Activated CD8-positive, alpha-beta memory T cell treated with anti-CD3 and anti-CD28 coated beads, Interleukin-2, amount 10 ng/mL, durations not matched to agents 7 days and 5 days (primary cell): ENCODE measurements at regions of chr15 and their contacts with region 1.

Region 1: GRCh38 chr15:45402162-45402954 is 24.0 kb upstream of the GATM start:
- DNase-seq: peak; percentile 98
- ATAC-seq: peak; percentile 94
- H3K4me3 Mint-ChIP-seq: peak overlapping the region; percentile 87
- H3K27ac Mint-ChIP-seq: peak overlapping the region; percentile 87
- H3K4me1 Mint-ChIP-seq: peaks cover 38% of the 10 kb centered on the region
- H3K27me3 Mint-ChIP-seq: no peaks in the 10 kb centered on the region

Region 2: GRCh38 chr15:45166834-45167630 is 235.3 kb before region 1 on chr15:
- CTCF ChIA-PET with region 1: interaction called, 34 read pairs
- DNase-seq: peak; percentile 92
- ATAC-seq: peak; percentile 95
- H3K4me3 Mint-ChIP-seq: peak overlapping the region; percentile 61
- H3K27ac Mint-ChIP-seq: peak overlapping the region; percentile 79
- H3K4me1 Mint-ChIP-seq: peaks cover 14% of the 10 kb centered on the region
- H3K27me3 Mint-ChIP-seq: no peaks in the 10 kb centered on the region

Region 3: GRCh38 chr15:45205192-45205591 is 197.2 kb before region 1 on chr15:
- CTCF ChIA-PET with region 1: interaction called, 19 read pairs
- DNase-seq: peak; percentile 81
- ATAC-seq: peak; percentile 35
- H3K4me3 Mint-ChIP-seq: no peak overlapping the region
- H3K27ac Mint-ChIP-seq: no peak overlapping the region
- H3K4me1 Mint-ChIP-seq: peaks cover 5% of the 10 kb centered on the region
- H3K27me3 Mint-ChIP-seq: peaks cover 26% of the 10 kb centered on the region

Region 4: DNA sequence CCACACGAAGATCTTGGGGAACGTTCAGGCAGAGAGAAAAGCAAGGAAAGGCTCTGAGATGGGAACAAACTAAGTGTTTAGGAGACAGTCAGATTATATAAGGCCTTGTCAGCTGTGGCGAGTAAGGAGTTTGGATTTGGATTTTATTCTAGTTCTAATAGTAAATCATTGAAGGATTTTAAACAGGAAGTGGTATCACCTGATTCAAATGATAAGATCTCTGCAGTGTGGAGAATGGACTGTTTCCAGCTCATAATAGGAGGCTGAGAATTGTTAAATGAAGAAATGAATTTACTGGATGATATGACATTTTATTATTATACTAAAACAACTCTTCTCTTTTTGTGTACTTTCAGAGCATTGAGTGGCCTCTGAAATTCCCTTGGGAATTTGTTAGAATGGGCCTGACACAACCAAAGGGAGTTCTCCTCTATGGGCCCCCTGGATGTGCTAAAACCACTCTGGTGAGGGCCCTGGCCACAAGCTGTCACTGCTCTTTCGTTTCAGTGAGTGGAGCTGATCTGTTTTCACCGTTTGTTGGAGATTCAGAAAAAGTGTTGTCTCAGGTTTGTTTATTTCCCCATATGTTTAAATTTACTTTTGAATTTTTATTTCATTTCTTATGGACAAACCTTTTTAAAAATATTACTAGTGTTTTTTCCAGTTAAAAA is 12.0 kb after region 1 on chr15:
- CTCF ChIA-PET with region 1: interaction called, 13 read pairs
- DNase-seq: peak; percentile 55
- ATAC-seq: peak; percentile 69
- H3K4me3 Mint-ChIP-seq: no peak overlapping the region
- H3K27ac Mint-ChIP-seq: peak overlapping the region; percentile 65
- H3K4me1 Mint-ChIP-seq: peaks cover 25% of the 10 kb centered on the region
- H3K27me3 Mint-ChIP-seq: no peaks in the 10 kb centered on the region

Region 5: DNA sequence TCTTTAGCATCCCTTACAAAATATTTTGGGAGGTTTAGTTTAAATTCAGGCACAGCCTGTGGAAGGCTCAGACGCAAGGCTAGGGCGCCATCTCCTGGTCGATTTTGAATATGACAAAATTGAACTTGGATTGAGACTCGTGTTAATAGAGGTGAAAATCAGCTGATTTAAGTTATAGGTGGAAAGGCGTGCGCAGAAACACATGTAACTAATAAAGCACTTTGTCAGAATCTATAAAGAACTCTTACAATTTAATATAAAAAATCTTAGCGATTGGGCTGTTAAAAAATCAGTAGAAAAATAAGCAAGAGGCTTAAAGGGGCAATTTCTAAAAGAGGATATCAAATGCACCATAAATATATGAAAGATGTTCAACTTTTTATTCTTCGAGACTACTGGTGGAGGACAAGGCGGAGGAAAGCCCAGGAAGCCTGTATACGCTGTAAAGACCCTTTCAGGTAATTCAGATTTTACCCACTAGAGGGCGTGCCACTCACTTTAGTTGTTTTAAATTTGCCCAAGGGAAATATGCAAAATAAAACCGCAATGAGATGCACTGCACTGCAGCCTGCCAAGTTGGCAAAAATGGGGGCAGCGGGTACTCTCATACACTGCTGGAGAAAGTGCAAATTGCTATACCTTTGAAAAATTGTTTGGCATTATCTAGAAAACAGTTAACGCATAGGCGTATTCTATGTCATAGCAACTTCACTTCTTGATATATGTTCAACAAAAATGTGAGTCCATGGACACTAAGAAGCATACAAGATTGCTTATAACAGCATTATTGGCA is 55.5 kb after region 1 on chr15:
- CTCF ChIA-PET with region 1: interaction called, 40 read pairs
- DNase-seq: peak; percentile 87
- ATAC-seq: peak; percentile 50
- H3K4me3 Mint-ChIP-seq: peak overlapping the region; percentile 79
- H3K27ac Mint-ChIP-seq: peak overlapping the region; percentile 88
- H3K4me1 Mint-ChIP-seq: peaks cover 53% of the 10 kb centered on the region
- H3K27me3 Mint-ChIP-seq: no peaks in the 10 kb centered on the region